Activated B cell treated with CpG ODN at 0.5 μM for 24 hours (primary cell): ENCODE measurements at regions of chr12 and their contacts with region 1.

Region 1: DNA sequence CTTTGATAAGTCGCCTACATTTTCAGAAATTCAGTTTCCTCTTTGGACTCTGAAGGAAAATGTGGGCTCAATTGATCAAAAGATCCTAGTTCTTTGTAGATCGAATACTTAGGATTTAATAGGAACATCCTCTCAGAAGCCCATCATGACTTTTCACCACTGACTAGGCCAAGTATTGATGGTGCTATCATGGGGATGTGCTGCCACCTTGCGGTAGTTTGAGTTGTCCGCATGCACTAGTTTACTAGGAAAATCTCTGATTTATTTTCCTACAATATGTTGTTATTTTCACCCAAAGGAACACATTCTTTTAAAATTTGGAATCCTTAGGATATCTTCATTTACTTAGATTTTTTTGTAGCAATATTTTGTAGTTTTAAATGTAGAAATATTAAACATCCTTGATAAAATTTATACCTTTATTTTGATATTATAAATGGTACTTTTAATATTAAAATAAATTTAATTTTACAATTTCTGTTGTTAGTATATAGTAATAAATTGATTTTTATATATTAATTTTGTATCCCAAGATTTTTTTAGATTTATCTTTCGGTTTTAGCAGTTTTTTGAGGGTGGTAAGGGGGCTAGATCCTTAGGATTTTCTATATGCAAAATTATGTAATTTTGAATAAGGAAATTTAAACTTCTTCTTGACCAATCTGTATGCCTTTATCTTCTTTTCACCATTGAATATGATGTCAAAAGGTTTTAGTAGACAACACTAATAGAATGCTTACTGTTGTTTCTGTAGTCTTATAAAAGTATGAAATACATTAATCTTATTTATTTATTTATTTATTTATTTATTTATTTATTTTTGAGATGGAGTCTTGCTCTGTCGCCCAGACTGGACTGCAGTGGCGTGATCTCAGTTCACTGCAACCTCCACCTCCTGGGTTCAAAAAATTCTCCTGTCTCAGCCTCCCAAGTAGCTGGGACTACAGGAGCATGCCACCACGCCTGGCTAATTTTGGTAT is 52.9 kb upstream of the OR9K2 start:
- DNase-seq: peak; percentile 48
- ATAC-seq: peak; percentile 60
- H3K4me3 Mint-ChIP-seq: no peak overlapping the region
- H3K27ac Mint-ChIP-seq: no peak overlapping the region
- H3K4me1 Mint-ChIP-seq: peaks cover 17% of the 10 kb centered on the region
- H3K27me3 Mint-ChIP-seq: peaks cover 3% of the 10 kb centered on the region
- CTCF ChIP-seq: peak; percentile 97

Region 2: DNA sequence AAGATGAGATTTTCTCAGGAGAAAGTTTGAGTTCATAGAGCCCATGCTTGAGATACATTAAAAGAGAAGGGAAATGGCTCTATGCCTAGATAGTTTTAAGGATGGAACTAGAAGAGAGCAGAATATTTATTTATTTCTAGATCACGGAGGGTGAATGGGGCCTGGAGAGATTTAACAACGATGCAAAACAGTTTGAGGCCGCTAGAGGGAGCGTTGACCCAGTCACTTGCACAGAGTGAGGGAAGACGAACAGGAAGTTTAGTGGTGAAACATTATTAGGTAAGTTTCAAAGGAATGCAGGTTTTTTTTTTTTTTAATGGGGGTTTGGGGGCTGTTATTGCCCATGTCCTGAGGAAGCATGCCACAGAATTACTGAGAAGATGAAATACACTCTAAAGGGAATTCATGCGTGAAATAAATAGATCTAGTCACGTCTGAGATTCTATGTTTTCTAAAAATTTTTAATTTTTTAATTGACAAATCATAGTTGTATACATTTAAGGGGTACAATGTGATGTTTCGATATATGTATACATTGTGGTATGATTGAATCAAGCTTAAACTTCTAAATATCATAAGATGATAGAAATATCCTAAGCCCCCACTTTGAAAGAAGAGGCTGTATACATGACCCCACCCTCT is 470.0 kb before region 1 on chr12:
- CTCF ChIA-PET with region 1: no interaction called
- POLR2A ChIA-PET with region 1: no interaction called
- intact Hi-C with region 1: loop called (anchors 5 kb)
- DNase-seq: no peak
- ATAC-seq: peak; percentile 85
- H3K4me3 Mint-ChIP-seq: no peak overlapping the region
- H3K27ac Mint-ChIP-seq: no peak overlapping the region
- H3K4me1 Mint-ChIP-seq: peaks cover 2% of the 10 kb centered on the region
- H3K27me3 Mint-ChIP-seq: peaks cover 7% of the 10 kb centered on the region
- CTCF ChIP-seq: peak; percentile 71

Region 3: GRCh38 chr12:54723379-54724256 is 349.7 kb before region 1 on chr12:
- CTCF ChIA-PET with region 1: interaction called, 3 read pairs
- POLR2A ChIA-PET with region 1: no interaction called
- intact Hi-C with region 1: loop called (anchors 1 kb)
- DNase-seq: no peak
- ATAC-seq: peak; percentile 34
- H3K4me3 Mint-ChIP-seq: no peak overlapping the region
- H3K27ac Mint-ChIP-seq: no peak overlapping the region
- H3K4me1 Mint-ChIP-seq: peaks cover 3% of the 10 kb centered on the region
- H3K27me3 Mint-ChIP-seq: peaks cover 18% of the 10 kb centered on the region
- CTCF ChIP-seq: peak; percentile 14

Region 4: DNA sequence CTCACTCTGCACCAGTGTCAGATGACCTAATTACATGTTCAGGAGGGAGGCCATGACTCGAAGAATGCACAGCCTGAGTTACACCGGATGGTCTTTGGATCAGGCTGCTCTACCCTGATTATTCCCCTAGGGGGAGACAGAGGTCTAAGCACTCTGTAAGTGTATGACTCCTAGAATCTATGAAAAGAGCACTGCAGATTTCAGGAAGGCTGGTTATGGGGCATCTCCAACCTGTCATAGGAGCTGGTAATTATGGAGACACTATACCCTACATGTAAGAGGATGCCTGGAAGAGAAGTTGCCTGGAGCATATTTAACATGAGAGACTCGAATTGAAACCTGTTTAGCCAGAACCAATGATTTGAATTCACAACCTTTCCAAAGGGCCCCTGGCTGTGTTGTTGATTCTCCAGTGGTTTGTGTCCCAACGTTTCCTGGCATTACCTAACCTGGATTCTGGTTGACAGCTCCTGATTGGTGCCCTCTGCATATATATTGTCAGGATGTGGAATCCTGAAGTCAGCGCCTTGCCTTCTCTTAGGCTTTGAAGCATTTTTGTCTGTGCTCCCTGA is 219.3 kb before region 1 on chr12 and contains the start of gene MUCL1:
- CTCF ChIA-PET with region 1: interaction called, 13 read pairs
- POLR2A ChIA-PET with region 1: no interaction called
- intact Hi-C with region 1: loop called (anchors 1 kb)
- DNase-seq: no peak
- ATAC-seq: peak; percentile 92
- H3K4me3 Mint-ChIP-seq: no peak within 1 kb of the TSS
- H3K27ac Mint-ChIP-seq: no peak within 1 kb of the TSS
- H3K4me1 Mint-ChIP-seq: no peaks in the 10 kb centered on the region
- H3K27me3 Mint-ChIP-seq: peaks cover 10% of the 10 kb centered on the region
- CTCF ChIP-seq: peak; percentile 77
- total RNA-seq, gene MUCL1: not detected in 2 replicates

Region 5: DNA sequence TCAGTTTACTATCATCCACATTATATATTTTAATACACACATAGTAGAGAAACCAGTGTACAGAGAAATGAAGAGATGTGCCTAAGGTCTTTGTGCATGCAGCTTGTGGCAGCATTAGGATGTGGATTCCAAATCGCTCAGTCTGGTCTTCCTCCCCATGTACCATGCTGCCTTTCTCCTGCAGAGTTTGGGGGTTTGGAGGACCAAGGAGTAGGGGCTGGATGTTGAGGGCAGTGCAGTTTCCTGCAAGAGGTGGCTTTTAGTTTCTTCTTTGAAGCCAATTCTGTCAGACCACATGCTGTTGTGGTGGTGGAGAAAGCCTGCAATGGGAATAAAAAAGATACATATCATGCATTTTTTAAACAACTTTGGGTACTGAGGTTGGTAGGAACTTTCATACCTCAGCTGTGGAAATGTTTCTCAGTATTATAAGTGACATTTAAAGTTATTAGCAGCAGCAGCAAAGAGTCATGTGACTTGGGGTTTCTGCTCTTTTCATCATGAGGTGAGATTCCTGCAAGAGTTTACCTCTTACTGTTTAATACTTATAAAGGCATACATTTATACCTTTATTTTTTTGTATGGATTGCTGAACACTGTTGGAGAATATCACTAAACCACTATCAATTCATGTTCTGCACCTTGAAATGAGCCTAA is 123.1 kb before region 1 on chr12:
- CTCF ChIA-PET with region 1: no interaction called
- POLR2A ChIA-PET with region 1: no interaction called
- intact Hi-C with region 1: no loop called
- DNase-seq: no peak
- ATAC-seq: no peak
- H3K4me3 Mint-ChIP-seq: no peak overlapping the region
- H3K27ac Mint-ChIP-seq: no peak overlapping the region
- H3K4me1 Mint-ChIP-seq: peaks cover 1% of the 10 kb centered on the region
- H3K27me3 Mint-ChIP-seq: no peaks in the 10 kb centered on the region
- CTCF ChIP-seq: no peak

Region 6: GRCh38 chr12:54993161-54993835 is 80.0 kb before region 1 on chr12:
- CTCF ChIA-PET with region 1: interaction called, 425 read pairs
- POLR2A ChIA-PET with region 1: interaction called, 23 read pairs
- intact Hi-C with region 1: loop called (anchors 1 kb)
- DNase-seq: no peak
- ATAC-seq: peak; percentile 68
- H3K4me3 Mint-ChIP-seq: no peak overlapping the region
- H3K27ac Mint-ChIP-seq: no peak overlapping the region
- H3K4me1 Mint-ChIP-seq: peaks cover 43% of the 10 kb centered on the region
- H3K27me3 Mint-ChIP-seq: no peaks in the 10 kb centered on the region
- CTCF ChIP-seq: peak; percentile 75

Region 7: DNA sequence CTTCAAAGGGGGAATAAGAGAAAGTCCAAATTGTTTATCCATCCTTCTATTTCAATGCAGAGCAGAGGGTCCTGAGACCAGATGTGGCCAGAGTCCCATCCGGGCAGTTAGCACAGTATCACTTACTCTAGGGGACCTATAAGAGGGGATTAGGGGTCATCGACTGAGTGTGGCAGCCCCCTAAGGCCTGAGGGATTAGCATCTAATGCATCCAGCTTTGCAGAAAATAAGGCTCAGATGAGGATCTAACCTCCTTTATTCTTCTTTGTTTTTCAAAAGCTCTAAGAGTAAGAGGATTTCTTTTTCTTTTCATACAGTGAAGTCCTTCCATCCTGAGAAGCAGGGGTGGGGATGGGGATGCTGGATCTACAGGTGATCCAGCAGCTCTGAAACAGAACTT is 10.0 kb before region 1 on chr12:
- CTCF ChIA-PET with region 1: interaction called, 12 read pairs
- POLR2A ChIA-PET with region 1: no interaction called
- intact Hi-C with region 1: no loop called
- DNase-seq: no peak
- ATAC-seq: no peak
- H3K4me3 Mint-ChIP-seq: no peak overlapping the region
- H3K27ac Mint-ChIP-seq: no peak overlapping the region
- H3K4me1 Mint-ChIP-seq: peaks cover 10% of the 10 kb centered on the region
- H3K27me3 Mint-ChIP-seq: peaks cover 14% of the 10 kb centered on the region
- CTCF ChIP-seq: no peak